Ovary (tissue), 10 donors: ENCODE measurements at regions of chr17 and their contacts with region 1.

Region 1: GRCh38 chr17:61412143-61412859 is 12.7 kb downstream of the TBX2 start:
- DNase-seq: peak; percentile 84 to 93 (median 87)
- H3K4me3 ChIP-seq: peak overlapping the region; percentile 61
- H3K27ac ChIP-seq: peak overlapping the region; percentile 31 to 80
- H3K4me1 ChIP-seq: peaks cover 9% of the 10 kb centered on the region
- H3K27me3 ChIP-seq: no peaks in the 10 kb centered on the region
- CTCF ChIP-seq: peak; percentile 97 to 99 (median 98)
- EP300 ChIP-seq: no peak
- POLR2A ChIP-seq: peak; percentile 51

Region 2: GRCh38 chr17:60720763-60721531 is 691.4 kb before region 1 on chr17:
- intact Hi-C with region 1: loop called in 2 of 4 experiments (anchors 10 kb)
- DNase-seq: peak in 1 of 5 donors; percentile 33
- H3K4me3 ChIP-seq: no peak overlapping the region
- H3K27ac ChIP-seq: no peak overlapping the region
- H3K4me1 ChIP-seq: no peaks in the 10 kb centered on the region
- H3K27me3 ChIP-seq: no peaks in the 10 kb centered on the region
- CTCF ChIP-seq: peak; percentile 51 to 70 (median 56)
- EP300 ChIP-seq: no peak
- POLR2A ChIP-seq: no peak

Region 3: DNA sequence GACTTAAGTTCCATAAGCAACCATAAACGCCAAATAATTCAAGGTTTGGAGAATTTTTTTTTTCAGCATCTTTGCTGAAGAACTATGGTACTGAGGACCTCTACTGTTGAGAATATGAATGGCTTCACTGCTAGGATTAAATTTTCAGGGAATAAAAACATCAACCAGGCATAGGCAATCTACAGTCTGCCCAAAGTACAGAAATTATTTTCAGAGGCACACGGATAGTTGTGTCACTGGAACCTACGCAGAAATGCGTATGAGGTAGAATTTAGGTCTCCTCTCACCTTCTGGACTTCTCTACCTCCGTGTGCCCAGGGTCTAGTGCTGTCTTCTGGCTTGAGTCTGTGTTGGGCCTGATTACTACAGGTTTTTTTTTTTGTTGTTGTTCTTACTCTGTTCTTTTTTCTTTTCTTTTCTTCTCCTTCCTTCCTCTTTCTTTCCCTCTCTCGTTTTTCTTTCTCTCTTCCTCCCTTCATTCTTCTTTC is 139.0 kb after region 1 on chr17:
- intact Hi-C with region 1: loop called in 1 of 4 experiments (anchors 10 kb)
- DNase-seq: no peak
- H3K4me3 ChIP-seq: no peak overlapping the region
- H3K27ac ChIP-seq: no peak overlapping the region
- H3K4me1 ChIP-seq: no peaks in the 10 kb centered on the region
- H3K27me3 ChIP-seq: no peaks in the 10 kb centered on the region
- CTCF ChIP-seq: no peak
- EP300 ChIP-seq: no peak
- POLR2A ChIP-seq: no peak

Region 4: GRCh38 chr17:61849674-61850073 is 437.4 kb after region 1 on chr17:
- intact Hi-C with region 1: loop called in 1 of 4 experiments (anchors 10 kb)
- DNase-seq: no peak
- H3K4me3 ChIP-seq: no peak overlapping the region
- H3K27ac ChIP-seq: no peak overlapping the region
- H3K4me1 ChIP-seq: no peaks in the 10 kb centered on the region
- H3K27me3 ChIP-seq: no peaks in the 10 kb centered on the region
- CTCF ChIP-seq: no peak
- EP300 ChIP-seq: no peak
- POLR2A ChIP-seq: no peak

Region 5: DNA sequence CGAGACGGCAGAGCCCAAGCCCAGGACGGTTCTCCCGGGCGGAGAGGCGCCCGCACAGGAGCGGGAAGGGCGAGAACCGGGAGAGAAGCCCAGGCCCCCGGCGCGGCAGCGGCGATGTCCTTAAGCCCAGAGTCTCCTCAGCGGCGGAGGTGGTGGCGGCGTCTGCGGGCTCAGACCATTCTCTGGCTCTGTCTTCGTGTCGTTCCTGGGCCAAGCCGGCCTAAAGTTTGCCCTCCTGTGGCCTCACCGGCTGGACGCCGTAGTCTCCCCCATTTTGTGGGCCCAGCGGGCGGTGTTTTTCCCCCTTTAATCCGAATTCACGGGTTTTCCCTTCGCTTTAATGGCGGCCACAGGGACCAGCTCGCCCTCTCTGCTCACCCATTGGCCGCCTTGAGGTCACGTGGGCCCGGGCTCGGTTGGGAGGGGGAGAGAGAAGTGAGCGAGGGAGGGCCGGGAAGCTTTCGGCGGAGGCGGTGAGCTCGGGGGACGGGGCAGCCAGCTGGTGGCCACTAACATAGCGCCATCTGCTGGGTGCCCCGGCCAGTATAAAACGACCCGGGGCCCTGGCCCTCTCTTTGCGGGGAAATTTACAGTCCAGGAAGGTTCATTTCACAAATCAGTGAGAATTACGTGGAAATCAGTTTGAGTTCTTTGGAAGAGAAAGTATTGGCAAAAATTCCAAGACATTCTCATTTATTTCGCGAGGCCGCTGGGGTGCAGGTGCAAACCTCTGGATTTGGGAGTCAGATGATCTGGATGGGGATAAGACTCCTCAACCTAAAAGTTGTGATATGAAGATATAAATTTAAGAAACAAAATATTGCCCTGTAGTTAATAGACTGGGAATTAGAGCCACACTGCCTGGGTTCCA is 653.5 kb after region 1 on chr17:
- intact Hi-C with region 1: loop called in 2 of 4 experiments (anchors 5 to 10 kb)
- DNase-seq: peak; percentile 97 to 99 (median 98)
- H3K4me3 ChIP-seq: peak overlapping the region; percentile 98
- H3K27ac ChIP-seq: peak overlapping the region; percentile 86 to 98
- H3K4me1 ChIP-seq: peaks cover 1% of the 10 kb centered on the region
- H3K27me3 ChIP-seq: no peaks in the 10 kb centered on the region
- CTCF ChIP-seq: peak; percentile 88 to 93 (median 90)
- EP300 ChIP-seq: no peak
- POLR2A ChIP-seq: peak; percentile 79